ENCODE measurements at regions of chr1 and their contacts with region 1.

Region 1: DNA sequence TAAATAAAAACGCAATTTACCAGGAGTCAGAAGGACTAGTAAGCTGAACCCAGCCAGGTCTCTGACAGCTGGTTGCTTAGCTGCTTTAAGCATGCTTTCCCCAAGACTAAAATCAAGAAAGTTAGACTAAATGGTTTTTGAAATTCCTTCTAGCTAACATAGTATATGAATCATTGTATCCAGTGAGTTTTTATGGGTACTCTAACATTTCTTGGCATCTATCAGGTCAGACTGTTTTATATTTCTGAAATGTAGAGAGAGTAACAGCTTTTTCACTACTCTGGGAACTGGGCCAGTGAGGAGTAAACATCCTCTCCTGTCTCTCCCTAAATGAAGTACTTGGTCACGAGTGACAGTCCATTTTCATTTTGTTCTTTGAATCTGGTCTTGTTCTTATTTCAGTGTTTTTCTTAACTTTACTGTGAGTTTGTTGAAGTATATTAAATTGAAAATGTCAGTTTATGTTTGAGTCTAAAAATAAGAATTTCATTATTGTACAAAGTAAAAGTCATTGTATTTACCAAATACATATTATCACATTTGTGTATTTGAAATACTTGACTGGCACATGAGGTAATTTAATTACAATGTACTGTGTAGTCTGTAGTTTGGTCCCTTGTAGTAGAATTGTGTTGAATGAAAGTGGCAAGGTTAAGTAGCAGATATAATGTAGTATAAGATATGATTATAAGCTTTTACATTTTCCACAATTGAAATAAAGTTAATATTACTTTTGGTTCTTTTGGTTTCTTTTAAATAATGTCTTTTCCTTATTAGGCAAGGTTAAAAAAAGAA is 47.6 kb downstream of the PKN2 start:
- DNase-seq: peak; percentile 88
- H3K4me3 ChIP-seq: peak overlapping the region; percentile 4
- CTCF ChIP-seq: no peak

Region 2: GRCh38 chr1:88698140-88698539 is 33.5 kb before region 1 on chr1:
- in situ Hi-C with region 1: loop called (anchors 5 kb)
- DNase-seq: no peak
- H3K4me3 ChIP-seq: no peak overlapping the region
- CTCF ChIP-seq: no peak